ENCODE measurements at regions of chr7 and their contacts with region 1.

Region 1: DNA sequence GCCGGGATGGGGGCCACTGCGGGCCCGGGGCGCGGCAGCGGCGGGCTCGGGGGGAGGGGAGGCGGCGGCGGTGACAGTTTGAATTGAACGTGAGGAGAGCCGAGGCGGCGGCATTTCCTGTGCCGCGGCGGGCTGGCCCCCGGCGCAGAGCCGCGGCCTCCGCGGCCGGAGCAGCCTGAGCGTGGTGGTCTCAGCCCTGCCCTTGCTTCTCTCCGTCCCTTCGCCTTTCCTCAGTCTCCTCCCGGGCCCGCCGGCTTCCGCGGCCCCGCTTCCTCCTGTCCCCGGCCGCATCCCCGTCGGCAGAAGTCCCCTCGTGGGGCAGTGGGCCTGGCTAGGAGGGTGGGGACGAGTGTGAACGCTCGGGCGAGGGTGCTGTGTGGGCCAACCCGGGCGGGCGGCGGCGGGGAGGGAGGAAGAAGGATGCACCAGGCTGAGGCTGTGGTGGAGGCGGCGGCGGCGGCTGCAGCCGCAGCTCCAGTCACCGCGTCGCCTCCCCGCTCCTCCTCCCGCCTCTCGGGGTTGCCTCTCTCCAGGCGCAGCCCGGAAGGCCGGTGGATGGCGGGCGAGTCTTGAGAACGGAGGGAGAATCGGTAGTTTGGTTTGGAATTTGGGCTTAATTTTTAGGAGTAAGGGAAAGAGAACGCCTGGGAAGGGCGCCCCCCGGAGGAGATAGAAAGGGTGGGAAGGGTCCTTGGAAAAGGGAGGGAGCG is 690 bp downstream of the SEPTIN7 start:
- DNase-seq: peak; percentile 72 to 79
- H3K4me3 ChIP-seq: peak overlapping the region; percentile 95
- H3K4me3 Mint-ChIP-seq: peak overlapping the region; percentile 90
- H3K27ac Mint-ChIP-seq: peak overlapping the region; percentile 96
- H3K4me1 ChIP-seq: peaks cover 26% of the 10 kb centered on the region
- H3K4me1 Mint-ChIP-seq: peaks cover 25% of the 10 kb centered on the region
- H3K27me3 ChIP-seq: no peaks in the 10 kb centered on the region
- H3K27me3 Mint-ChIP-seq: no peaks in the 10 kb centered on the region
- CTCF ChIP-seq: peak; percentile 76 to 82

Region 2: DNA sequence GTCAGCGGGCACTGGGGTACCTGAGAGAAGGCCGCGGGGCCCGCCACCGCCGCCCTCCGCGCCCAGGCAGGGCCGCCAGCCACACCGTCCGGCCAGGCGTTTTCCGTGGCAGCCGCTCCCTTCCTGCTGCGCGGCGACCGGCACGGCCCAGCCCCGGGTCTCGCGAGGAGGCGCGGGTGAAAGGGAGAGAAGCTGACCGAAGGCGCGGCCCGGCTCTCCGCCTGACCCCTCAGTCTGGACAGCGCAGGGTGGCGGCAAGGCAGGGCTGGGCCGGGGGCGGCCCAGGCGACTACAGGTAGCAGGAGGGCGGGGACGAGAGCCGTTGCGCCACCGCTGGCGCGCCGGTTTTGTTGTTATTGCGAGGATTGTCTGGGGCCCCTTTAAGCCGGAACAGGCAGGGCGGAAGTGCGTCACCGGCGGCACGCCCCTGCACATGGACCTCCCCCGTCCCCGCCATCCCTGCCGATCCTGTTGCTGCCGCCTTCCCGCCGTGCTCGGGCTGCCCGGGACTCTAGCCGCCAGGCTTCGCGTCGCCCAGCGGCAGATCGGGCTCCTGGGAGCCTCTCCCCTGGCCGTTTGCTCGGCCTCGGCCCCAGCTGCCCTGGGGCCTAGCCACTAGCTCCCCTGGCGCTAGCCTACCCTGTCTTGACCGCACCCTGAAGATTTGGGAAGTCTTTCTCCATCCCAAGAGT is 106.6 kb before region 1 on chr7 and contains the start of gene HERPUD2:
- CTCF ChIA-PET with region 1: interaction called, 7 read pairs
- POLR2A ChIA-PET with region 1: interaction called, 20 read pairs
- intact Hi-C with region 1: no loop called
- DNase-seq: peak; percentile 98
- H3K4me3 ChIP-seq: peak within 1 kb of the TSS; percentile 98
- H3K4me3 Mint-ChIP-seq: peak within 1 kb of the TSS; percentile 95
- H3K27ac Mint-ChIP-seq: peak within 1 kb of the TSS; percentile 94
- H3K4me1 ChIP-seq: peaks cover 40% of the 10 kb centered on the region
- H3K4me1 Mint-ChIP-seq: peaks cover 36% of the 10 kb centered on the region
- H3K27me3 ChIP-seq: no peaks in the 10 kb centered on the region
- H3K27me3 Mint-ChIP-seq: no peaks in the 10 kb centered on the region
- CTCF ChIP-seq: no peak
- total RNA-seq, gene HERPUD2: 25.2 and 29.6 TPM in 2 replicates

Region 3: DNA sequence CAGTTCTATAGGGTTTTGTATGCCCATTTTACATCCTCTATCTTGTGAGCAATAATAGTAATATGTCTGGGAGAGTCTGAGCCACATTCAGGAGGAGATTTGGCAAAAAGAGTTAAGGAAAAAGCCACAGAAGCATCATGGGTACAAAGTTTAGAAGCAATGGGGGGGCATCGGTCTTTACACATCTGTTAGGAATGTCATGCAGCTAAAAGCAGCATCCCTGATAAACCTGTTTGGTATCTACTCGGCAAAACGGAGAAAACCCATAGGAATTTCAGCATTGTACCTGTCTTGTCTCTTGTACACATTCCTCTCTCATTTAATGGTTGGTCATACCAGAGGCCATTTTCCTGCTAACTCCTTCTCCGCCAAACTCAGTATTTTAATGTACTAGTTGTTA is 94.1 kb before region 1 on chr7:
- CTCF ChIA-PET with region 1: interaction called, 13 read pairs
- POLR2A ChIA-PET with region 1: interaction called, 14 read pairs
- intact Hi-C with region 1: loop called (anchors 1 kb)
- DNase-seq: peak; percentile 66 to 68
- H3K4me3 ChIP-seq: no peak overlapping the region
- H3K4me3 Mint-ChIP-seq: peak overlapping the region; percentile 6
- H3K27ac Mint-ChIP-seq: peak overlapping the region; percentile 64
- H3K4me1 ChIP-seq: peaks cover 44% of the 10 kb centered on the region
- H3K4me1 Mint-ChIP-seq: peaks cover 30% of the 10 kb centered on the region
- H3K27me3 ChIP-seq: no peaks in the 10 kb centered on the region
- H3K27me3 Mint-ChIP-seq: no peaks in the 10 kb centered on the region
- CTCF ChIP-seq: no peak

Region 4: GRCh38 chr7:35714862-35715261 is 86.7 kb before region 1 on chr7:
- CTCF ChIA-PET with region 1: interaction called, 13 read pairs
- POLR2A ChIA-PET with region 1: interaction called, 14 read pairs
- intact Hi-C with region 1: loop called (anchors 1 kb)
- DNase-seq: peak; percentile 67 to 78
- H3K4me3 ChIP-seq: no peak overlapping the region
- H3K4me3 Mint-ChIP-seq: peak overlapping the region; percentile 8
- H3K27ac Mint-ChIP-seq: peak overlapping the region; percentile 63
- H3K4me1 ChIP-seq: peaks cover 64% of the 10 kb centered on the region
- H3K4me1 Mint-ChIP-seq: peaks cover 43% of the 10 kb centered on the region
- H3K27me3 ChIP-seq: no peaks in the 10 kb centered on the region
- H3K27me3 Mint-ChIP-seq: no peaks in the 10 kb centered on the region
- CTCF ChIP-seq: peak; percentile 11 to 28

Region 5: DNA sequence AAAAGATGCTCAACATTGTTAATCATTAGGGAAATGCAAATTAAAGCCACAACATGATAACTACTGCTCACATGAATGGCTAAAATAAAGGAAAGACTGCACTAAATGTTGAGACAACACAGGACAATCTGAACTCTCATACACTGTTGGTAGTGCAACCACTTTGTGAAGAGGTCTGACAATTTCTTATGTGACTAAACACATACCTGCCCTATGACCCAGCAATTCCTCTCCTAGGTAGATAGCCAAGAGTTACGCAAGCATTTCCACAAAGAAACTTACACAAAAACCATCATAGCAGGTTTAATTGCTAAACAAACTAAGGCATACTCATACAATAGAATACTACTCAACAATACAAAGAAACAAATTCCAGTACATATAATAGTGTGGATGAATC is 64.8 kb before region 1 on chr7:
- CTCF ChIA-PET with region 1: no interaction called
- POLR2A ChIA-PET with region 1: interaction called, 3 read pairs
- intact Hi-C with region 1: loop called (anchors 2 kb)
- DNase-seq: peak; percentile 58 to 74
- H3K4me3 ChIP-seq: no peak overlapping the region
- H3K4me3 Mint-ChIP-seq: no peak overlapping the region
- H3K27ac Mint-ChIP-seq: peak overlapping the region; percentile 81
- H3K4me1 ChIP-seq: peaks cover 42% of the 10 kb centered on the region
- H3K4me1 Mint-ChIP-seq: peaks cover 35% of the 10 kb centered on the region
- H3K27me3 ChIP-seq: no peaks in the 10 kb centered on the region
- H3K27me3 Mint-ChIP-seq: no peaks in the 10 kb centered on the region
- CTCF ChIP-seq: no peak

Region 6: DNA sequence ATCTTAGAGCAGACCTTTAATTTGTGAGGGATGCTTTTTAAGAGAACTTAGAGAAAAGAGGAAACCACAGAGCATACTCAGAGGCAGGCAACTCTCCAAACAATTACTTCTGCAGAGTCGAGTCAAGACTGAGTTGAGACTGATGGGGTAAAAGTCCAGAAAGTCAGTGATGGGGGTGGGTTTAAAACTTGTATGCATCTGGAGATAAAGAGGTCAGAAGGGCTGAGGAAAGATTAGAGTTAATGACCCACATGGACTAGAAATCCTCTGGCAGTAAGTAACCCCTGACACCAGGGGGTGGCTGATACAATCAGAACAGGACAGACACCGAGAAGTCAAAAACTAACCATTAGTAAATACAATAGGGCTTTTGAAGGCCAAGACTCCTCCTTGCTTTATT is 43.1 kb before region 1 on chr7:
- CTCF ChIA-PET with region 1: interaction called, 4 read pairs
- POLR2A ChIA-PET with region 1: interaction called, 3 read pairs
- intact Hi-C with region 1: loop called (anchors 1 kb)
- DNase-seq: peak; percentile 87 to 88
- H3K4me3 ChIP-seq: no peak overlapping the region
- H3K4me3 Mint-ChIP-seq: peak overlapping the region; percentile 15
- H3K27ac Mint-ChIP-seq: peak overlapping the region; percentile 46
- H3K4me1 ChIP-seq: peaks cover 95% of the 10 kb centered on the region
- H3K4me1 Mint-ChIP-seq: peaks cover 39% of the 10 kb centered on the region
- H3K27me3 ChIP-seq: no peaks in the 10 kb centered on the region
- H3K27me3 Mint-ChIP-seq: no peaks in the 10 kb centered on the region
- CTCF ChIP-seq: peak; percentile 50 to 66

Region 7: GRCh38 chr7:35869810-35870209 is 68.3 kb after region 1 on chr7:
- CTCF ChIA-PET with region 1: no interaction called
- POLR2A ChIA-PET with region 1: no interaction called
- intact Hi-C with region 1: no loop called
- DNase-seq: no peak
- H3K4me3 ChIP-seq: no peak overlapping the region
- H3K4me3 Mint-ChIP-seq: no peak overlapping the region
- H3K27ac Mint-ChIP-seq: no peak overlapping the region
- H3K4me1 ChIP-seq: 0 out of 2 replicates have a peak, but pooled peaks cover 13% of the 10 kb centered on the region
- H3K4me1 Mint-ChIP-seq: peaks cover 9% of the 10 kb centered on the region
- H3K27me3 ChIP-seq: no peaks in the 10 kb centered on the region
- H3K27me3 Mint-ChIP-seq: no peaks in the 10 kb centered on the region
- CTCF ChIP-seq: no peak

Region 8: GRCh38 chr7:35906191-35906908 is 104.8 kb after region 1 on chr7:
- CTCF ChIA-PET with region 1: no interaction called
- POLR2A ChIA-PET with region 1: interaction called, 6 read pairs
- intact Hi-C with region 1: loop called (anchors 1 kb)
- DNase-seq: peak; percentile 60 to 75
- H3K4me3 ChIP-seq: no peak overlapping the region
- H3K4me3 Mint-ChIP-seq: no peak overlapping the region
- H3K27ac Mint-ChIP-seq: no peak overlapping the region
- H3K4me1 ChIP-seq: no peaks in the 10 kb centered on the region
- H3K4me1 Mint-ChIP-seq: no peaks in the 10 kb centered on the region
- H3K27me3 ChIP-seq: no peaks in the 10 kb centered on the region
- H3K27me3 Mint-ChIP-seq: no peaks in the 10 kb centered on the region
- CTCF ChIP-seq: peak; percentile 74 to 88